IMR-90 (cell line): ENCODE measurements at regions of chr11 and their contacts with region 1.

Region 1: DNA sequence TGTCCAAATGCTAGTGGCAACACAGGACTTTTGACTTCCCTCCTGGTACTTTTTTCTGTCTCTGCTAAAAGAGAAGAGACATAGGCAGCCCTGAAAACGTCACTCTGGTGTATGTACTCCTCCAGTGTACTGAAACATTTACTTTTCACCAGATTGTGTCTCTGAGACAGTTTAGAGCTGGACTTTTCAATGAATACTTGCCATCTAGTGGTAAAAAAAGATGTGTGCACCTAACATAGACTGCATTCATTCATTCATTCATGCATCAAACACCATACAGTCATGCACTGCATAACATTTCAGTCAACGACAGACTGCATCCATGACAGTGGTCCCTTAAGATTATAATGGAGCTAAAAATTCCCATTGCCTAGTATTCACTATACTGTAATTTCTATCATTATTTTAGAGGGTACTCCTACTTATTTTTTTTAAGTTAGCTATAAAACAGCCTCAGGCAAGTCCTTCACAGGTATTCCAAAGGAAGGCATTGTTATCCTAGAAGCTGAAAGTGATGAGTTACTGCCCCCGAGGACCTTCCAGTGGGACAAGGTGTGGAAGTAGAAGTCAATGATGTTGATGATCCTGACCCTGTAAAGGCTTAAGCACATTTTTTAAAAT is 186.2 kb downstream of the SPON1 start:
- DNase-seq: peak; percentile 44
- ATAC-seq: peak; percentile 85
- H3K4me3 ChIP-seq: no peak overlapping the region
- H3K27ac ChIP-seq: no peak overlapping the region
- H3K4me1 ChIP-seq: no peaks in the 10 kb centered on the region
- H3K27me3 ChIP-seq: peaks cover 3% of the 10 kb centered on the region; the same call in 1 of the 2 replicates
- CTCF ChIP-seq: peak; percentile 66
- POLR2A ChIP-seq: no peak
- RAD21 ChIP-seq: peak; percentile 72

Region 2: DNA sequence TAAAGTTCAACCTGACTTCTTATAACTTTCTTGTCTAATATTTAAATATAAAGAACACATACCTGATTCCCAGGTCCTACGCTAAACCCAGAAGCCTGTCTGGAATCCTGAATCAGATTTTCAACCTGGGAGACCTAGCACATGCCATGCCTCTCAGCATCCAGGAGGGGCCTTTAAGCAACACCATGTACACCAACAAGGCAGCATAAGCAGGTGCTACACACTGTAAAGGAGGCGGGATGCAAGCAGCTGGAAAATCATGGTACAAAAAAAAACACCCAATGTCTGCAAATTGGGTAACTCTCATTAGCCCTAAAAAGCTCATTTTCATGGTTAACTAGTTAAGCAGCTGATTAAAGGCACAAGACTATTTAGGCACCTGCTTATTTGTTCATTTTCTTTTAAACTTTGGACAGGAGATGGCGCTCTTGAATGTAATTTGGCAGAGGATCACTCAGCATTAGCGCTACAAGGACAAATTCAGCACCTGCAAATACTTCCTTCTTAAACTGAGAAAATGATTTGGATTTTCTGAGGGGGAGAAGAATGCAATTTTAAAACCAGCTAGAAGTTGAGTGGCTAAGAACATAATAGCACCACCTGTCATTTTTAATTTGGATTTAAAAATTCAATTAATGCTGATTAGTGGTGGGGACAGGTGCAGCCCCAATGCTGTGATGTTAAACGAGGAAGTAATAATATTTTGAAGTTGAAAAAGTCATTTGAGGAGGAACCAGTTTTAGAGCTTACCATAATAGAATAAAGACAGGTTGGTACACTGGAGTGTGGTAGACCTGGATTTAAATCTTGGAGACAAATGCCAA is 376.3 kb before region 1 on chr11:
- CTCF ChIA-PET with region 1: no interaction called
- POLR2A ChIA-PET with region 1: no interaction called
- dilution Hi-C with region 1: no loop called
- in situ Hi-C with region 1: no loop called
- intact Hi-C with region 1: loop called (anchors 2 kb)
- DNase-seq: peak; percentile 62
- ATAC-seq: no peak; the same call in 1 of the 2 replicates
- H3K4me3 ChIP-seq: no peak overlapping the region
- H3K27ac ChIP-seq: no peak overlapping the region
- H3K4me1 ChIP-seq: no peaks in the 10 kb centered on the region
- H3K27me3 ChIP-seq: peaks cover 7% of the 10 kb centered on the region
- CTCF ChIP-seq: peak; percentile 54
- POLR2A ChIP-seq: no peak
- RAD21 ChIP-seq: peak; percentile 57

Region 3: GRCh38 chr11:13955971-13956421 is 192.8 kb before region 1 on chr11:
- CTCF ChIA-PET with region 1: interaction called, 25 read pairs
- POLR2A ChIA-PET with region 1: no interaction called
- dilution Hi-C with region 1: no loop called
- in situ Hi-C with region 1: loop called (anchors 5 kb)
- intact Hi-C with region 1: loop called (anchors 1 kb)
- DNase-seq: peak; percentile 71
- ATAC-seq: peak; percentile 88
- H3K4me3 ChIP-seq: no peak overlapping the region
- H3K27ac ChIP-seq: no peak overlapping the region
- H3K4me1 ChIP-seq: no peaks in the 10 kb centered on the region
- H3K27me3 ChIP-seq: peaks cover 53% of the 10 kb centered on the region
- CTCF ChIP-seq: peak; percentile 88
- POLR2A ChIP-seq: no peak
- RAD21 ChIP-seq: peak; percentile 94

Region 4: GRCh38 chr11:13962562-13963168 is 186.1 kb before region 1 on chr11 and contains the start of gene SPON1:
- CTCF ChIA-PET with region 1: interaction called, 25 read pairs
- POLR2A ChIA-PET with region 1: no interaction called
- dilution Hi-C with region 1: no loop called
- in situ Hi-C with region 1: loop called (anchors 5 kb)
- intact Hi-C with region 1: no loop called
- DNase-seq: peak; percentile 15
- ATAC-seq: peak; percentile 78
- H3K4me3 ChIP-seq: peak within 1 kb of the TSS; percentile 16; the same call in 1 of the 2 replicates
- H3K27ac ChIP-seq: no peak within 1 kb of the TSS
- H3K4me1 ChIP-seq: no peaks in the 10 kb centered on the region; the same call in 1 of the 2 replicates
- H3K27me3 ChIP-seq: peaks cover 83% of the 10 kb centered on the region
- CTCF ChIP-seq: no peak
- POLR2A ChIP-seq: no peak
- RAD21 ChIP-seq: no peak
- total RNA-seq, gene SPON1: 0.56 and 0.72 TPM in 2 replicates

Region 5: GRCh38 chr11:13970986-13971385 is 177.8 kb before region 1 on chr11:
- CTCF ChIA-PET with region 1: interaction called, 8 read pairs
- POLR2A ChIA-PET with region 1: no interaction called
- dilution Hi-C with region 1: no loop called
- in situ Hi-C with region 1: no loop called
- intact Hi-C with region 1: loop called (anchors 5 kb)
- DNase-seq: no peak
- ATAC-seq: peak; percentile 63
- H3K4me3 ChIP-seq: no peak overlapping the region
- H3K27ac ChIP-seq: no peak overlapping the region
- H3K4me1 ChIP-seq: peaks cover 2% of the 10 kb centered on the region; the same call in 1 of the 2 replicates
- H3K27me3 ChIP-seq: peaks cover 29% of the 10 kb centered on the region
- CTCF ChIP-seq: peak; percentile 40
- POLR2A ChIP-seq: no peak
- RAD21 ChIP-seq: peak; percentile 53

Region 6: DNA sequence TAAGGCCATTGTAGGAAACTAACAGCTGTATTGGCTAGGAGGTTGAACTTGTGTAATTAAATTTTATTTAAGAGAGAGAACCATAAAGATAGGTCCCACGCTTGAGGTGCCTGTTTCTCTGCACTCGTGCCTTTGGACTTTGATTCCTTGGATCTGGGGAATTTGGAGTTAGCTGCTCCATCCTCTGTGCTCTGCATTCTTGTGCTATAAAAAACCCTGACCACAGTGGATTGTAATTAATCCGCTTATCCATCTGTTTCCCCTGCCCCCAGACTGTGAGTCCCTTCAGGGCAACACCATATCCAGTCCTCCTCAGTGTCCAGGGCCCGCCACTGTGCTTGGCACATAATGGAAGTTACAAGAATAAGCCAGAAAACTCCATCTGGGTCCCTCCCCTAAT is 16.5 kb before region 1 on chr11:
- CTCF ChIA-PET with region 1: no interaction called
- POLR2A ChIA-PET with region 1: no interaction called
- dilution Hi-C with region 1: no loop called
- in situ Hi-C with region 1: no loop called
- intact Hi-C with region 1: no loop called
- DNase-seq: peak; percentile 5
- ATAC-seq: no peak
- H3K4me3 ChIP-seq: no peak overlapping the region
- H3K27ac ChIP-seq: no peak overlapping the region
- H3K4me1 ChIP-seq: no peaks in the 10 kb centered on the region
- H3K27me3 ChIP-seq: peaks cover 3% of the 10 kb centered on the region
- CTCF ChIP-seq: no peak
- POLR2A ChIP-seq: no peak
- RAD21 ChIP-seq: no peak

Region 7: GRCh38 chr11:14212986-14213385 is 64.2 kb after region 1 on chr11:
- CTCF ChIA-PET with region 1: no interaction called
- POLR2A ChIA-PET with region 1: interaction called, 14 read pairs
- dilution Hi-C with region 1: no loop called
- in situ Hi-C with region 1: no loop called
- intact Hi-C with region 1: no loop called
- DNase-seq: no peak
- ATAC-seq: no peak
- H3K4me3 ChIP-seq: no peak overlapping the region
- H3K27ac ChIP-seq: no peak overlapping the region
- H3K4me1 ChIP-seq: no peaks in the 10 kb centered on the region
- H3K27me3 ChIP-seq: peaks cover 2% of the 10 kb centered on the region; the same call in 1 of the 2 replicates
- CTCF ChIP-seq: no peak
- POLR2A ChIP-seq: no peak
- RAD21 ChIP-seq: no peak

Region 8: GRCh38 chr11:14249121-14249963 is 100.6 kb after region 1 on chr11:
- CTCF ChIA-PET with region 1: no interaction called
- POLR2A ChIA-PET with region 1: no interaction called
- dilution Hi-C with region 1: no loop called
- in situ Hi-C with region 1: no loop called
- intact Hi-C with region 1: loop called (anchors 2 kb)
- DNase-seq: peak; percentile 53
- ATAC-seq: peak; percentile 56
- H3K4me3 ChIP-seq: no peak overlapping the region
- H3K27ac ChIP-seq: no peak overlapping the region
- H3K4me1 ChIP-seq: peaks cover 2% of the 10 kb centered on the region; the same call in 1 of the 2 replicates
- H3K27me3 ChIP-seq: peaks cover 49% of the 10 kb centered on the region
- CTCF ChIP-seq: peak; percentile 92
- POLR2A ChIP-seq: 0 out of 2 replicates have a peak, but pooled peaks have one; percentile 23
- RAD21 ChIP-seq: peak; percentile 95